ENCODE measurements at regions of chr20 and their contacts with region 1.

Region 1: GRCh38 chr20:9359561-9360308 is 154.7 kb upstream of the LAMP5 start:
- DNase-seq: peak; percentile 24 to 62
- ATAC-seq: peak; percentile 38 to 81 (median 70)
- H3K4me3 ChIP-seq: no peak overlapping the region
- H3K27ac ChIP-seq: peak overlapping the region in 5 of 10 donors; percentile 14 to 50 (median 17)
- H3K4me1 ChIP-seq: peaks cover 0 to 23% (median 10%) of the 10 kb centered on the region in 9 donors
- H3K27me3 ChIP-seq: no peaks in the 10 kb centered on the region
- CTCF ChIP-seq: peak; percentile 35 to 78 (median 61)

Region 2: DNA sequence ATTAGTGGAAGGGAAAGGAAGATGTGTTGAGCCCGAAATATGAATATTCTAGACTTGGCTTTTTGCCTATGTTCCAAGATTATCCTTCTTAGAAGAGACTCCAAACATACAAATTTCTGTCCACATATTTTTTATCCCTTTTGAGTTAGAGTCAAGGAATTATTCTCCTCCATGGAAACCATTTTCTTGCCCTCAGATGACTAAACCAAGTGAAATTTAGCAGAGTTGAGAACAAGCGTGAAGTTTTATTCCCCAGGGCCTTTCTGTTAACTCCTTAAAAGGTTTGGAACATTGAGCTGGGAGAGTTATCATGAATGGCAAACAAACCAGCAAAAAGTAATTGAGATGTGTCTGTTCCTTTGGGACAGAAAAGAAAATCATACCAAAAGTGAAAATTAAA is 576.9 kb before region 1 on chr20:
- intact Hi-C with region 1: loop called in 3 of 10 experiments (anchors 2 to 10 kb)
- DNase-seq: no peak
- ATAC-seq: peak in 2 of 8 donors; percentile 35 to 38
- H3K4me3 ChIP-seq: no peak overlapping the region
- H3K27ac ChIP-seq: peak overlapping the region in 1 of 10 donors; percentile 35
- H3K4me1 ChIP-seq: peaks cover 0 to 9% (median 0%) of the 10 kb centered on the region in 9 donors
- H3K27me3 ChIP-seq: no peaks in the 10 kb centered on the region
- CTCF ChIP-seq: no peak

Region 3: DNA sequence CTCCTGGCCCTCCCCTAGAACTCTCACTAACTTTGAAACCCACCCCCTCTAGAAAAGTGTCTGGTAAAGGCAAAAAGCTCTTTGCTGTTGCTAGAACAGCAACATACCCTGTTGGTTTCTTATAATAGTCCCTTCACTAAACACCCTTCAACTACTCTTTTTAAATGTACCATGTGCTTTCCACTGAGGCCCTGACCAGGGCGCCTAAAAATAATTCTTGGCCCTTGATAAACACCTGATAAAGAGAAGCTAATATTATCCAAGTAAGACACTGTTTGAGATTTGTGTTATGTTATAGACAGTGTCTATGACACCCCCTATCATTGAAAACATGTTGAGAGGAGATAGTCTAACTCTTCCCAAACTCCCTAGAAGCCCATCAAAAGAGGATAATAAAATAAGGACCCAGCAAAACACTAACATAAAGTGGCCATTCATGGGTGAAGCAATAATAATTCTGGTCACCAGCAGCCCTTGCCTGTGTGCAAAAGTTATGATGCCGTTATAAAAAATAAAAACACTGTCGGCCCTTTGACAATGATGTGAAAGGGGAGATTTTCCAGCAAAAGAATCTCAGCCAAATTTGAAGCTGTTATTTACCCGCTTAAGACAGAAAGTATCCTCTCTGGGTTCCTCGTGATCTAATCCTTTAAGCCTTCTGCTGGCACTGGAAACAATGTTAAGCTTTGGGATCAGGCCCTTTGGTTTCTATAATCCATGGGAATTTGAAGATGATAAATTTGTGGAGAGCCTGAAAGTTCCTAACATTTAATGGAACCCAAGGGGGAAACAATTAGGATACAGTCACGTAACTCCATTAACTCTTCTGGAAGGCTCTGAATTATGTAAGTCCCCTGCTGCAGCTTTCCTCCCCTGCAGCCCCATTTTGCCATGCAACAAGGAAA is 413.4 kb before region 1 on chr20:
- intact Hi-C with region 1: loop called in 1 of 10 experiments (anchors 10 kb)
- DNase-seq: no peak
- ATAC-seq: peak; percentile 47 to 86 (median 72)
- H3K4me3 ChIP-seq: no peak overlapping the region
- H3K27ac ChIP-seq: peak overlapping the region in 9 of 10 donors; percentile 0 to 75 (median 49)
- H3K4me1 ChIP-seq: peaks cover 2 to 42% (median 22%) of the 10 kb centered on the region in 9 donors
- H3K27me3 ChIP-seq: no peaks in the 10 kb centered on the region
- CTCF ChIP-seq: no peak

Region 4: DNA sequence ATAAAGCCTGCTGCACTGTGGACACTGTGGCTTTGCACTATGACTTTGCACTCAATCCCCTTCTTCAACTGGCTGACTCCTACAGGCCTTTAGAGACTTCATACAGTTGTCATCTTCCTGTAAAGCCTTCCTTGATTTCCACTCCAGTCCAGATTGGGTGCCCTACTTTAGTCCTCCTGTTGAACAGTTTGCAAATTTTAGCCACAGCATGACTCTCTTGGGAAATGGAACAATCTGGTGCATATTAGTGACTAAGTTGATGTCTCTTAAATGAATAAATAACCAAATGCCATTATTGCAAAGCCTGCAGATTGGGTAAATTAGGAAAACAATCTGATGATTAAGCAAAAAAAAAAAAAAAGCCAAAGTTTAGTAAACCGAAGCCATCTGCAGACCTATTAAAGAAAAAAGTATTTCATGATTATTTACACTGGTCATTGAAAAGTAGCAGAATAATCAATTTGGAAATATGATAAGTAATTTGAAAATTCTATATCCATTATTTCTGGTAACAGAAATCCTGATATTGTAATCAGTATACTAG is 278.2 kb before region 1 on chr20:
- intact Hi-C with region 1: loop called in 4 of 10 experiments (anchors 10 kb)
- DNase-seq: no peak
- ATAC-seq: no peak
- H3K4me3 ChIP-seq: no peak overlapping the region
- H3K27ac ChIP-seq: no peak overlapping the region
- H3K4me1 ChIP-seq: peaks cover 7 to 71% (median 30%) of the 10 kb centered on the region in 9 donors
- H3K27me3 ChIP-seq: no peaks in the 10 kb centered on the region
- CTCF ChIP-seq: no peak

Region 5: GRCh38 chr20:9215539-9215938 is 144.2 kb before region 1 on chr20:
- intact Hi-C with region 1: loop called in 2 of 10 experiments (anchors 10 kb)
- DNase-seq: no peak
- ATAC-seq: no peak
- H3K4me3 ChIP-seq: no peak overlapping the region
- H3K27ac ChIP-seq: no peak overlapping the region
- H3K4me1 ChIP-seq: peaks cover 0 to 43% (median 20%) of the 10 kb centered on the region in 9 donors
- H3K27me3 ChIP-seq: no peaks in the 10 kb centered on the region
- CTCF ChIP-seq: peak in 7 of 9 donors; percentile 21 to 45 (median 25)